Stomach (tissue), 19 donors: ENCODE measurements at regions of chr14 and their contacts with region 1.

Region 1: GRCh38 chr14:20469890-20470602 is 840 bp downstream of the PNP start:
- DNase-seq: peak; percentile 40 to 69
- H3K4me3 ChIP-seq: peak overlapping the region; percentile 70 to 76 (median 74)
- H3K27ac ChIP-seq: peak overlapping the region; percentile 91 to 96 (median 92)
- H3K4me1 ChIP-seq: peaks cover 14 to 54% (median 28%) of the 10 kb centered on the region in 4 donors
- H3K27me3 ChIP-seq: no peaks in the 10 kb centered on the region
- CTCF ChIP-seq: no peak
- EP300 ChIP-seq: no peak
- POLR2A ChIP-seq: no peak

Region 2: DNA sequence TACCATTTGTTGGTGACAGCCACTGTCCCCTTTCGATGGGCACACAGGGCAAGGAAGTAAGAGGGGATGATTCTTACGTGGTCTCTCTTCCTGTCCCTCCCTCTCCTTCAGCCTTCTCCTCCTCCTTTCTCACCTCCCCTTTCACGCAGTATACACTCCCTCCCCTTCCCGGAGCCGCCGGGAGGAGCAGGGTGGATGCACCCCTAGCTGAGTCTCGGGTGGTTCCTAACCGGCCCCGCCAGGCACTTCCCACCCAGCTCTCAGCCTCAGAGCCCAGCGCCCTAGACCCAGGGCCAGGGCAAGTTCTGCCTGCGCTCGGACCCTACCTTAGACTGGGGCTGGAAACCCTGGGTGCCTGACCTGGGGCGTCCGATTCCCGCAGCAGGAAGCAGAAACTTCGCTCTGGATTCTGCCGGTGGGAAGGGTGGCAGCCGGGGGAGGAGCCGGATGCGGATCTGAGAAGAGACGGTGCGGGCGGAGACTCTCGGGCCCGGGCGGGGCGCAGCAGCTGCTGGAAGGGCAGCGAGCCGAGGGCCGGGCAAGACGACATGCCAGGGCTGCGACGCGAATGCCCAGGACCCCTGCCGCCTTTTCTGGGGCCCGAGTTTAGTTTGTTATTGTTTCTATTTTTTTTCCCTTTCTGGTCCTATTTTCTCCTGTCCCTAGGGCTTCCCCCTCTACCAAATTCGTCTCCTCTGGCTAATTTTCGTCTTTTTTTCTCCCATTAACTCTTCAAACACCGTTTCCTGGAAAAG is 56.8 kb before region 1 on chr14 and contains the start of gene TEP1:
- intact Hi-C with region 1: loop called (anchors 10 kb)
- DNase-seq: peak; percentile 90 to 95
- H3K4me3 ChIP-seq: peak within 1 kb of the TSS; percentile 64 to 95 (median 78)
- H3K27ac ChIP-seq: peak within 1 kb of the TSS; percentile 92 to 99 (median 96)
- H3K4me1 ChIP-seq: peaks cover 19 to 55% (median 34%) of the 10 kb centered on the region in 4 donors
- H3K27me3 ChIP-seq: no peaks in the 10 kb centered on the region
- CTCF ChIP-seq: no peak
- EP300 ChIP-seq: no peak
- POLR2A ChIP-seq: peak in 1 of 4 donors; percentile 24
- total RNA-seq, gene TEP1: 16.9 to 190 (median 34.1) TPM

Region 3: DNA sequence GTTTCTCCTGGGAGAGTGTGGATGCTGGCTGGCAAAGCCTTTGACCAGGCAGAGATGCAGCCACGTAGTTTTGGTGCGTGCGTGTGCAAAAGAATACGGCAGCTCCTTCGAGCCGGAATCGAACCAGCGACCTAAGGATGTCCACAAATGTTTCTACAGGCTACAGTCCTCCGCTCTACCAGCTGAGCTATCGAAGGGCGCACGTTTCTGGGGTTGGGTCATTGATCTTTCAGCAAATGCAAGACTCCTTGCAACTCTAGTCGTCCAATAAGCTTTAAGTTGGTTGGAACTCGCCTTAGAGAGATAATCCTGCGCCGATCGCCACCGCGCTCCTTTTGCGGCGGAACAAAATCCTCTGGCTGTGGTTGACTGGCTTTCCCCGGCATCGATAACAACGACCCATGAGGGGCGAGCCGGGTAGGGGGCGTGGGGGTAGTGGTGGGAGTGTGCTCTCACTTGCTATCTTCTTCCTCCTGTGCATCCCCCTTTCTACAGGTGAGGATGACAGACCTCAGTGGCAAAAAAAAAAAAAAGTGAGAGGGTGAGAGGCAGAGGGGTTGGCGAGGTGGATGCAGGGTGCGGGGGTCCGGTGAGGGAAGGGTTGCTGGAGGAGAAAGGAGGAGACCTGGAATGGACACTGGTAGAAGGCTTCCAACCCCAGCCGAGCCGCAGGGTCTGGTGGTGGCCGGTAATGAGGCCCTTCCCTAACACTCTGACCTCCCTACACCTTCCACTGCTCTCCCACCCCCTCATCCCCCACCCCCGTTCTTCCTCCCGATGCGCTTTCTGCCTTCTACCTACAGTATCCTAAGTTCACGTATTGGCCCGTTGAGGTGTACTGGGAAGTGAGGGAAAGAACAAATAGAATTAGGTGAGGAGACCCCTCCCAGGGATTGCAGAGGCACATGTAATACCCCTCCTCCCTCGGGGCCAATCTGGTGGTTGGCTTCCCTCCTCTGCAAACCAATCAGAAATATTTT is 183.2 kb after region 1 on chr14:
- intact Hi-C with region 1: no loop called
- DNase-seq: peak in 1 of 2 donors; percentile 62
- H3K4me3 ChIP-seq: peak overlapping the region in 1 of 4 donors; percentile 10
- H3K27ac ChIP-seq: no peak overlapping the region
- H3K4me1 ChIP-seq: peaks cover 0 to 13% (median 6%) of the 10 kb centered on the region in 4 donors
- H3K27me3 ChIP-seq: peaks cover 5 to 89% (median 63%) of the 10 kb centered on the region in 3 donors
- CTCF ChIP-seq: no peak
- EP300 ChIP-seq: no peak
- POLR2A ChIP-seq: no peak

Region 4: DNA sequence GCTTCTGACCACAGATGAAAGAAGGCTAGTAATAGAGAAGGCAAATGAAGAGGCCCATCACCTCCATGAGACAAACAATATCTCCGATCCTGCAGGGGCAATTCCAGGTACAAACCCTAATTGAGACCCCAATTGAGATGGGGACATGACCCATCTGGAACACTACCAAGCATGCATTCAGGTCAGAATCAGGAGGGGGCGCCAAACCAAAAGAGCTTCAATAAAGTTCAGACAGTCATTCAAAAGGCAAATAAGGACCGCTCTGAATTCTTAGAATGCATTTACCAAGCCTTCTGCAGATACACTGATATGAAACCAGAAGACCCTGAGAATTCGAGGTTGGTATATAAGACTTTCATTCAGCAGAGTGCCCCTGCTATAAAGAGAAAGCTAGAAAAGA is 287.9 kb after region 1 on chr14:
- intact Hi-C with region 1: no loop called
- DNase-seq: peak in 1 of 2 donors; percentile 32
- H3K4me3 ChIP-seq: no peak overlapping the region
- H3K27ac ChIP-seq: no peak overlapping the region
- H3K4me1 ChIP-seq: peaks cover 0 to 7% (median 0%) of the 10 kb centered on the region in 4 donors
- H3K27me3 ChIP-seq: no peaks in the 10 kb centered on the region
- CTCF ChIP-seq: peak in 1 of 7 experiments; percentile 13
- EP300 ChIP-seq: no peak
- POLR2A ChIP-seq: no peak